ENCODE measurements at regions of chr14 and their contacts with region 1.

Region 1: DNA sequence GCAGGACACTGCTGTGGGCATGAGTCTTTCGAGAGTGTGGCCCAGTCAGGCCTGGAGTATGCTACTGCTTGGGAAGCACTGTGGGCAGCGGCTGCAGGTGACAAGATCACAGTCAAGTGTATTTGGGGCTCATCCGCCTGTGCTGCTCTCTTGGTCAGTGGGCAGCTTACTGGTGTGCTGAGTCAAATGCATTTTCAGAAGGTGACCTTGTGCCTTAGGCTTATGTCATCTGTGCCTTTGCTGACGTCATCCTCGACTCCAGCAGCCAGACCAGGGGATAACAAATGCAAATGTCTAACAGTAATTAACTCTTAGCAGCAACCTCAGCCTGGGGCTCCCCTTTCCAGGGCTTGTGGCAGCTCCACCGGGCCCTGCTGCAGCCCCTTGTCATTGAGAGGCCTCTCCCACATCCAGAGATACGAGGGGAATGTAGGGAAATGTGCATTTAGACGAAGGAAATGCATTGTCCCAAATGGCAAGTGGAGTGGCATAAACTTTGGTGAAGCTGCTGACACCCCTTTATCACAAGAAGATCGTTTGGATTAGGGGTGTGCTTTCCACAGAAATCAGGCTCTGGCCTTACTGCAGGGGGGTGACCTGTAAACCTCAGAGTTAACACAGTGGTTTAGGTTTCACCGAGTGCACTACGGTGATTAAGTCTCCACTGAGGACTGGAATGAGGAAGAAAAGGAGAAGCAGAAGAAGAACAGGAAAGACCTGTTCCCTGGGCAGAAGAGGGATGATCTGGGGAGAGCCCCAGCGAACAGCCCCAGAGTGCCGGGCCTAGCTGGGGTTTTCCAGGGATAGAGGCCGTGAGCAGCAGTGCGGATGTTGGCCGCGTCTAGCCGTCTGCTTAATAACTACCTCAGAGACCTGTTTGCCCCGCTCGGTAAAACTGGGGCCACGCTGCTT is 39.7 kb downstream of the PSMA6 start:
- DNase-seq: no peak
- H3K4me3 ChIP-seq: no peak overlapping the region
- H3K27ac ChIP-seq: peak overlapping the region in 2 of 4 donors; percentile 92 to 95
- H3K4me1 ChIP-seq: peaks cover 32 to 47% (median 43%) of the 10 kb centered on the region in 4 donors
- H3K27me3 ChIP-seq: no peaks in the 10 kb centered on the region
- CTCF ChIP-seq: no peak
- EP300 ChIP-seq: no peak
- POLR2A ChIP-seq: no peak

Region 2: GRCh38 chr14:35292051-35292769 is 39.7 kb before region 1 on chr14 and contains the start of gene PSMA6:
- intact Hi-C with region 1: loop called (anchors 5 kb)
- DNase-seq: peak; percentile 100
- H3K4me3 ChIP-seq: peak within 1 kb of the TSS; percentile 72 to 91 (median 83)
- H3K27ac ChIP-seq: peak within 1 kb of the TSS; percentile 86 to 94 (median 90)
- H3K4me1 ChIP-seq: peaks cover 38 to 59% (median 51%) of the 10 kb centered on the region in 4 donors
- H3K27me3 ChIP-seq: no peaks in the 10 kb centered on the region
- CTCF ChIP-seq: peak in 1 of 3 experiments; percentile 7
- EP300 ChIP-seq: no peak
- POLR2A ChIP-seq: peak; percentile 61
- total RNA-seq, gene PSMA6: 70.5 to 143 (median 112) TPM

Region 3: DNA sequence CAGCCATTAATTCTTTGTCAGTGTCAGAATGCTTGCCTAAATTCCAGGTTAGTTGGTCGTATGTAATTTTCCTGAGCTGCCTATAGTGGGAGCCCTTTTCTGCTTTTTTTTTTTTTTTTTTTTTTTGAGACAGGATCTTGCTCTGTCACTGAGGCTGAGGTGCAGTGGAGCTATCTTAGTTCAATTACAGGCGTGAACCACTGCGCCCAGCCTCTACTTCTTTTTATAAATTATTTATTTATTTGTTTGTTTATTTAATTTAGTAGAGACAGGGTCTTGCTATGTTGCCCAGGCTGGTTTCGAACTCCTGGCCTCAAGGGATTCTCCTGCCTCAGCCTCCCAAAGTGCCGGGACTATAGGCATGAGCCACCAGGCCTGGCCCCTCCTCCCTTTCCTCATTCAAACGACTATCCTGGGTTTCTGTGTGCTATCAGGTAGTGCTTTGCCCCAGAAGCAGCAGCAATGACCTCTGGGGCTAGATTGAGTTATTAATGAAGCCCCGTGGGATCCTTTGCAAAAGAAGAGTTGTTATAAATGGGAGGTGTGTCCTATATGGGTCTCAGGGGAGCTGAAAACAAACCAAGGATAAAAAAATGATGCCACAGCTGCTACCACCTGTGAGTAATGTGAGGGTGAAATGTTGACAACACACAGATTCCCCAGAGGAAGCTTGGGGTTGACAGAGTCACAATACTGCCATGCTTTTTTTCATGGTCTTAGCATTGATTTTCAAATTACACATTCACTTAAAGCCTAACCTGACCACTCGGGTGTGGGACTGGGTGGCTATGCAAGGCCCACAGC is 107.3 kb after region 1 on chr14:
- intact Hi-C with region 1: no loop called
- DNase-seq: peak; percentile 53
- H3K4me3 ChIP-seq: no peak overlapping the region
- H3K27ac ChIP-seq: no peak overlapping the region
- H3K4me1 ChIP-seq: no peaks in the 10 kb centered on the region
- H3K27me3 ChIP-seq: no peaks in the 10 kb centered on the region
- CTCF ChIP-seq: peak in 1 of 3 experiments; percentile 32
- EP300 ChIP-seq: no peak
- POLR2A ChIP-seq: no peak

Region 4: DNA sequence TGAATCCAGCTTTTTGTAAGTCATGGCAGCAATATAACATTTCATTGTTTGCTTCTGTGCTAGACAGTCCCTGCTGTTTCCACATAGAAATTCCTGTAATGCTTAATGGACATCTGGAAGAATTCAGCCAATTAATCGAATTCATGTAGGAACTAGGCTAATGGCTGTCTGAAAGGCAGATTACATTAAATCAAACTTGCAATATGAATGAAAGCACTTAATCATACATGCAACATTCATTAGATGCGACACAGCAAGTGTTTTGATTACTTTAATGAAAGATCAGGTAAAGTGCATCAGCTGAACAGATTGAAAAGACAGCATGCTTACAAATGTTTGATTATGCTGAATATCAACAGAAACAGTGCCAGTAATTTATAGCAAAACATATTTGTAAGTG is 178.0 kb after region 1 on chr14:
- intact Hi-C with region 1: no loop called
- DNase-seq: no peak
- H3K4me3 ChIP-seq: no peak overlapping the region
- H3K27ac ChIP-seq: no peak overlapping the region
- H3K4me1 ChIP-seq: no peaks in the 10 kb centered on the region
- H3K27me3 ChIP-seq: peaks cover 0 to 3% (median 0%) of the 10 kb centered on the region in 4 donors
- CTCF ChIP-seq: no peak
- EP300 ChIP-seq: no peak
- POLR2A ChIP-seq: no peak